ENCODE measurements at regions of chr11 and their contacts with region 1.

Region 1: GRCh38 chr11:129375751-129376657 is at the start of gene BARX2:
- DNase-seq: peak; percentile 72
- H3K4me3 Mint-ChIP-seq: peak within 1 kb of the TSS; percentile 65
- H3K27ac Mint-ChIP-seq: no peak within 1 kb of the TSS
- H3K4me1 Mint-ChIP-seq: peaks cover 6% of the 10 kb centered on the region
- H3K27me3 Mint-ChIP-seq: peaks cover 96% of the 10 kb centered on the region
- CTCF ChIP-seq: peak; percentile 63
- total RNA-seq, gene BARX2: not detected in 2 replicates

Region 2: GRCh38 chr11:129364143-129364654 is 11.8 kb before region 1 on chr11:
- CTCF ChIA-PET with region 1: interaction called, 28 read pairs
- POLR2A ChIA-PET with region 1: interaction called, 4 read pairs
- intact Hi-C with region 1: no loop called
- DNase-seq: peak; percentile 89
- H3K4me3 Mint-ChIP-seq: no peak overlapping the region
- H3K27ac Mint-ChIP-seq: no peak overlapping the region
- H3K4me1 Mint-ChIP-seq: peaks cover 6% of the 10 kb centered on the region
- H3K27me3 Mint-ChIP-seq: peaks cover 61% of the 10 kb centered on the region
- CTCF ChIP-seq: peak; percentile 100

Region 3: DNA sequence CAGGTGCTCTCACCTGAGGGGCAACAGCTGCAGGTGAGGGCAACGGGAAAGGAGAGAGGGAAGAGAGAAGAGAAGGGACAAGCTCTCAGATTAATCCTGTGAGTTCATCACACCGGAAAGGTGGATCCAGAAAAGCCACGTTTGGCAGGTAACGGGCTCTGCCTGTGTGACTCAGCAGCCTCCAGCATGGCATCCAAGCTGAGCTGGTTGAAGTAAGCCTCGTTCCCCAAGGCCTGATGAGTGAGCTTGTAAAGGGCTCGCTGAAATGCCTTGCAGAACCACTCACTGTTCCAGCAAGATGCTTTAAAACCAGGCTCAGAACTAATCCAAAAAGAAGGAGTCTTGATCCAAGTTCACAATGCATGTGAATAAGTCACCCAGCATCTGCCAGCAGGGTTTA is 232.7 kb after region 1 on chr11:
- CTCF ChIA-PET with region 1: interaction called, 15 read pairs
- POLR2A ChIA-PET with region 1: no interaction called
- intact Hi-C with region 1: no loop called
- DNase-seq: peak; percentile 82
- H3K4me3 Mint-ChIP-seq: no peak overlapping the region
- H3K27ac Mint-ChIP-seq: no peak overlapping the region
- H3K4me1 Mint-ChIP-seq: no peaks in the 10 kb centered on the region
- H3K27me3 Mint-ChIP-seq: no peaks in the 10 kb centered on the region
- CTCF ChIP-seq: no peak

Region 4: DNA sequence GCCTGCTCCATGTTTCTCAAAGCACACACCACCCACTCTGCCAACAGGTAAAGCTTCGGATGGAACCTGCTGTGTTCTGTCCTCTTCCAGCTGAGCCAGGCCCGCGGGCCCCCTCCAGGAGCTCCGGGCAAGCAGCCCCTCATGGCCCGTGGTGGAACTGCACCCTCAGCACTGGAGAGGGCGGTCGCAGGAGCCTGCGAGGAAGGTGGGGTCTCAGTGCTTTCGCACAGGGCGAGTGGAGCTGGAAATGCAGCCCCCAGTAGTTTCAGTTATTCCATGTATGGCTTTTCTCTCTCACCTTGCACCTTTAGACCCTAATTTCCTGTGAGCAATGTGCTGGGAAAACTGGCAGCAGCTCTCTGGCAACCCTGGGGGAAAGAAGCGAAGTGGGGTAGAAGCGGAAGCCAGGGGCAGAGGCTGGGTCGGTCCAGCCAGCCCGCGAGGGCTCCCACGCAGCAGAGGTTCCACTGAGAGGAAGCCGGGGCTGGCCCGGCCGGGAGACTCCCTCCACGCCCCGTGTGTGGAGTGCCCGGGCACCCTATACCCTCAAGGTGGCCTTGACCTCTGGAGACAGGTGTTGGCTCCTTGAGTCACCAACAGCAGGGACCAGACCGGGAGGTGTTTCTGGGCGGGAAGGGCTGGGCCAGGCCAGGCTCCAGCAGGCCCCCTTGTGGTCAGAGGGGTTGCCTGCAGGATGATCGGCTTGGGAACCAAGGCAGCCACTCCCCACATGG is 319.7 kb after region 1 on chr11:
- CTCF ChIA-PET with region 1: interaction called, 7 read pairs
- POLR2A ChIA-PET with region 1: no interaction called
- intact Hi-C with region 1: loop called (anchors 1 kb)
- DNase-seq: peak; percentile 62
- H3K4me3 Mint-ChIP-seq: no peak overlapping the region
- H3K27ac Mint-ChIP-seq: no peak overlapping the region
- H3K4me1 Mint-ChIP-seq: no peaks in the 10 kb centered on the region
- H3K27me3 Mint-ChIP-seq: peaks cover 60% of the 10 kb centered on the region
- CTCF ChIP-seq: peak; percentile 84

Region 5: DNA sequence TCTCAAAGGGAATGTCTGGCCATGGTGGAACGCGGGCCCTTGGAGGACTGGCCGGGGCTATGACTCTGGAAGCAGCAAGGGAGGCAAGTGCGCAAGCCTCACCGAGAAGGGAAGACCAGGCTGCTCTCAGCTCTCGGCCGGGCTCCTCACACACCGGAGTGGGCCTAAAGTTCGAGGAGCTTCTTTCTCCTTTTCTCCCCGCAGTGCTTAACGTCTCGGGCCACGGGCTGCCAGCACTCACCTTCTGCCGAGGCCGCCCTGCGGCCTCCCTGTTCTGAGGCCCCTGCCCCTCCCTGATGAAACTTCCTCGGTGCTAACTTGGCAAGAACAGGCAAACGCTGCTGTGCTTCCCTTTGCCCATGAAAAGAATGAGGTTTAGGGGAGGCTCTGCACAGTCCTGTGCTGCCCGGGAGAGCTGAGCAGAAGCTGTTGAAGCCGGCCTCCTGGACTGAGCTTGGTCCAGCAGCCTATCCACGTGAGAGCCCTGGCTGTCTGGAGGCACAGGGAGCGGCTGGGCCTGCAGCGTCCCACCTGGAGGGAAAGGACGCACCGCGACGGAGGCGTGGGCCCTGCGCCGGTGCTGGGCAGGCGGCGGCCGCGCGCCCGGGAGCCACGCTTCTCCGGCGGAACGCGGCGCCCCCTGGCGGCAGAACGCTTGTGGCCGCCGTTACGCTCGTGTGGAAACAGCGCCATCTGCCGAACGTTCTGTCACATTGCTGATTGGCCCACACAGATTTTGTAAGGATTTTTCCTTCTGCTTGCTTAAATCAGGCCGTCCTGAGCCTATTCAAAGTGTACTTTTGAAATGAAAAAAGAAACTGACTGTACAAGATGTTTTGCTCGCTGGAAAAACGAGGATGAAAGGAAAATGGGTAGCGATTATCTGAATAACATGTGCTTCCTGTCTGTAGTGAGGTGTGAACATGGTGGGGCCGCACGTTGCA is 374.6 kb after region 1 on chr11:
- CTCF ChIA-PET with region 1: interaction called, 75 read pairs
- POLR2A ChIA-PET with region 1: interaction called, 4 read pairs
- intact Hi-C with region 1: loop called (anchors 1 kb)
- DNase-seq: peak; percentile 72
- H3K4me3 Mint-ChIP-seq: no peak overlapping the region
- H3K27ac Mint-ChIP-seq: no peak overlapping the region
- H3K4me1 Mint-ChIP-seq: no peaks in the 10 kb centered on the region
- H3K27me3 Mint-ChIP-seq: peaks cover 13% of the 10 kb centered on the region
- CTCF ChIP-seq: peak; percentile 100

Measured in MCF 10A (cell line).